Activated CD4-positive, alpha-beta memory T cell treated with anti-CD3 and anti-CD28 coated beads, Interleukin-2, amount 10 ng/mL, durations not matched to agents 7 days and 5 days (primary cell): ENCODE measurements at regions of chr2 and their contacts with region 1.

Region 1: DNA sequence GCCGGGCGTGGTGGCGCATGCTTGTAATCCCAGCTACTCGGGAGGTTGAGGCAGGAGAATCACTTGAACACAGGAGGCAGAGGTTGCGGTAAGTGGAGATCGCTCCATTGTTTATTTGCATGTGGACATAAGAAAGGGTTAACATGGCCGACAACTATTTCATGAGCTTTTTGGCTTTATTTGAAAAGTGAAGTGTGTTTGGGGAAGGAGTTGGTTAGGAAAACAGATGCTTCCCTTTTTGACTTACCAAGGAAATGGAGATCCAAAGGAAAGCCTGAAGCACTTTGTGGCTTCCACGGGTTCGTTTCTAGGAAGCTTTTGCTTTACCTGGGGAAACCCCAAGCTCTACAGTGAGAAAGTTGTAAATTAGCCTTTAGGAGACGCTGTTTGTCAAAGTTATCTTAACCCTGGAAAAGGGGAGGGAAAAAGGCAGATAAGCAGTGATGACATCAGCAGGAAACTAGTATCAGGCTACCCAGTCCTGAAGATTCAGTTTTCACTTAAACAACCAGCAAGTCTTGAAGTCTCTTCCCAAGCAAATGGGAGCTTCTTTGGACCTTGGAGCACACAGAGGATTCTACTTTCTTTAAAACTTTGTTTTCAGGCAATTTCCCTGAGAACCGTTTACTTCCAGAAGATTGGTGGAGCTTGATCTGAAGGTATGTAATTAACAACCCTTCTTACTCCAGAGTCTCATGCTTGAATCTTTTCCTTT is at the start of gene CASP10:
- DNase-seq: no peak
- H3K4me3 Mint-ChIP-seq: peak within 1 kb of the TSS; percentile 98
- H3K27ac Mint-ChIP-seq: peak within 1 kb of the TSS; percentile 84
- H3K4me1 Mint-ChIP-seq: peaks cover 57% of the 10 kb centered on the region
- H3K27me3 Mint-ChIP-seq: no peaks in the 10 kb centered on the region
- total RNA-seq, gene CASP10: 47.8 to 51.3 TPM

Region 2: GRCh38 chr2:200901459-200902072 is 281.2 kb before region 1 on chr2:
- CTCF ChIA-PET with region 1: interaction called, 35 read pairs
- POLR2A ChIA-PET with region 1: interaction called, 5 read pairs
- DNase-seq: peak; percentile 81
- H3K4me3 Mint-ChIP-seq: no peak overlapping the region
- H3K27ac Mint-ChIP-seq: peak overlapping the region; percentile 53
- H3K4me1 Mint-ChIP-seq: peaks cover 32% of the 10 kb centered on the region
- H3K27me3 Mint-ChIP-seq: no peaks in the 10 kb centered on the region

Region 3: GRCh38 chr2:201071479-201072200 is 111.2 kb before region 1 on chr2 and contains the starts of genes HYCC2 and NDUFB3:
- CTCF ChIA-PET with region 1: interaction called, 16 read pairs
- POLR2A ChIA-PET with region 1: interaction called, 4 read pairs
- DNase-seq: peak; percentile 95
- H3K4me3 Mint-ChIP-seq: peak within 1 kb of the TSS; percentile 96
- H3K27ac Mint-ChIP-seq: peak within 1 kb of the TSS; percentile 88
- H3K4me1 Mint-ChIP-seq: peaks cover 57% of the 10 kb centered on the region
- H3K27me3 Mint-ChIP-seq: no peaks in the 10 kb centered on the region
- total RNA-seq, gene HYCC2: 27.9 to 31.9 TPM
- total RNA-seq, gene NDUFB3: 133 to 135 TPM

Region 4: DNA sequence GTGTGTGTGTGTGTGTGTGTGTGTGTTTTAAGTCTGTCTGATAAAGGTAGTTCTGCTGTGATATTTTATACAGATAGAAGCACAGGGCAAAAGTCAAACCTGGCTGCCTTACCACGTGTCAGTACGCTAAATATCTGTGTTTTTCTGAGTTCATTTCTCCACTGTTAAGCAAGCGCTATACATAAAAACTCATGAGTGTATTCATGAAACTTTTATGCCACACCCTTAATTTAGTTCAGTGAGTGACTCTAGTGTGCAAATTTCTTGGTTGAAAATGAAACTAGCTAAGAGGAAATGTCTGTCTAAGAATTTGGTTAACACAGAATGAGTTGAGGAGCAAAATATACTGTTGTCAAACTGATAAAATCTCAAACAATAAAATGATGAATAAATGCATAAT is 11.3 kb after region 1 on chr2:
- CTCF ChIA-PET with region 1: interaction called, 35 read pairs
- POLR2A ChIA-PET with region 1: interaction called, 63 read pairs
- DNase-seq: no peak
- H3K4me3 Mint-ChIP-seq: peak overlapping the region; percentile 54
- H3K27ac Mint-ChIP-seq: peak overlapping the region; percentile 87
- H3K4me1 Mint-ChIP-seq: peaks cover 74% of the 10 kb centered on the region
- H3K27me3 Mint-ChIP-seq: no peaks in the 10 kb centered on the region

Region 5: DNA sequence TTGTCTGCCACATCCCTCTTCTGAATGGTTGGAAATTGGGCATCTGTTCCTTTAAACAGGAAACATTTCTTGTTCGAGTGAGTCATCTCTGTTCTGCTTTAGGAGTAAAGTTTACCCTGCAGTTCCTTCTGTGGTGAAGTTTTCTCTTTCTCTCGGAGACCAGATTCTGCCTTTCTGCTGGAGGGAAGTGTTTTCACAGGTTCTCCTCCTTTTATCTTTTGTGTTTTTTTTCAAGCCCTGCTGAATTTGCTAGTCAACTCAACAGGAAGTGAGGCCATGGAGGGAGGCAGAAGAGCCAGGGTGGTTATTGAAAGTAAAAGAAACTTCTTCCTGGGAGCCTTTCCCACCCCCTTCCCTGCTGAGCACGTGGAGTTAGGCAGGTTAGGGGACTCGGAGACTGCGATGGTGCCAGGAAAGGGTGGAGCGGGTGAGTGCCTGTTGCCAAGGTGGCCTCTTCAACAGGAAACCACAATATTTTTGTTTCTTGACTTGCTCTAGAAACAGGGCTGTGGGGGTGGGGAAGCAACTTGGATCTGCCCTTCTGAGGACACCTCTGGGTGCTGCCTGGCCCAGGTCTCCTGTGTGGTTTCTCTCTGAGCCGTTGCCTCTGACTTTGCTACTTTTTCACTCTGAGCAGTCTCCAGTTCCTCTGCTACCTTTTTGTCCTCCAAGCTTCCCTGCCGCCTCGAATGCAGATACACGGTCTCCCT is 75.3 kb after region 1 on chr2:
- CTCF ChIA-PET with region 1: interaction called, 11 read pairs
- POLR2A ChIA-PET with region 1: interaction called, 29 read pairs
- DNase-seq: peak; percentile 96
- H3K4me3 Mint-ChIP-seq: peak overlapping the region; percentile 81
- H3K27ac Mint-ChIP-seq: peak overlapping the region; percentile 98
- H3K4me1 Mint-ChIP-seq: peaks cover 68% of the 10 kb centered on the region
- H3K27me3 Mint-ChIP-seq: no peaks in the 10 kb centered on the region